Endothelial cell of umbilical vein (primary cell): ENCODE measurements at regions of chr2 and their contacts with region 1.

Region 1: GRCh38 chr2:235551965-235552364 is 58.1 kb downstream of the AGAP1 start:
- DNase-seq: peak; percentile 81
- H3K4me3 ChIP-seq: no peak overlapping the region
- H3K27ac ChIP-seq: no peak overlapping the region
- H3K4me1 ChIP-seq: no peaks in the 10 kb centered on the region
- H3K27me3 ChIP-seq: no peaks in the 10 kb centered on the region
- CTCF ChIP-seq: peak; percentile 59 to 86
- POLR2A ChIP-seq: no peak

Region 2: GRCh38 chr2:235135990-235136561 is 415.9 kb before region 1 on chr2:
- CTCF ChIA-PET with region 1: interaction called, 15 read pairs
- POLR2A ChIA-PET with region 1: no interaction called
- dilution Hi-C with region 1: no loop called
- intact Hi-C with region 1: loop called (anchors 1 kb)
- DNase-seq: peak; percentile 63
- H3K4me3 ChIP-seq: no peak overlapping the region
- H3K27ac ChIP-seq: no peak overlapping the region
- H3K4me1 ChIP-seq: peaks cover 2% of the 10 kb centered on the region
- H3K27me3 ChIP-seq: peaks cover 2 to 6% of the 10 kb centered on the region in 2 experiments
- CTCF ChIP-seq: peak; percentile 66 to 79
- POLR2A ChIP-seq: no peak

Region 3: DNA sequence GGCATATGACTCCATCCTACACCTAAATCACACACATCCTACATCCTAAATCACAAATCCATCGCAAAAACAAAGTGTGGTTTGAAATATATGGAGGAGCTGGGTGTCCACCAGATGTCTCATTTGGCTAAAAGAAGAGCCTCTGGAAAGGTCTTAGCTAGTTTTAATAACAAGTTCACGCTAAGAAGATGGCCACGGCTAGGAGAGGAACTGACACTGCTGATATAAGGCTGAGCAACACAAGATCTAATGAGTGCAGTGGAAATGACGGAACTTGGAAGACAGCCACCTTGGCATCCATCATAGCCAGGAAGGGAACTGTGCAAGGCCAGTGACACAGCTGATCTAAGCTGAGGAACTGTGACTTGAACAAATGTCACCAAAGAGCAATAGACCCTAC is 118.1 kb before region 1 on chr2:
- CTCF ChIA-PET with region 1: interaction called, 14 read pairs
- POLR2A ChIA-PET with region 1: no interaction called
- dilution Hi-C with region 1: no loop called
- intact Hi-C with region 1: no loop called
- DNase-seq: peak; percentile 39
- H3K4me3 ChIP-seq: no peak overlapping the region
- H3K27ac ChIP-seq: no peak overlapping the region
- H3K4me1 ChIP-seq: no peaks in the 10 kb centered on the region
- H3K27me3 ChIP-seq: no peaks in the 10 kb centered on the region
- CTCF ChIP-seq: no peak
- POLR2A ChIP-seq: no peak

Region 4: GRCh38 chr2:235500761-235501672 is 50.9 kb before region 1 on chr2:
- CTCF ChIA-PET with region 1: interaction called, 23 read pairs
- POLR2A ChIA-PET with region 1: no interaction called
- dilution Hi-C with region 1: no loop called
- intact Hi-C with region 1: no loop called
- DNase-seq: peak; percentile 66
- H3K4me3 ChIP-seq: peak overlapping the region in 1 of 3 experiments; percentile 3
- H3K27ac ChIP-seq: peak overlapping the region; percentile 28
- H3K4me1 ChIP-seq: peaks cover 17% of the 10 kb centered on the region
- H3K27me3 ChIP-seq: no peaks in the 10 kb centered on the region
- CTCF ChIP-seq: no peak
- POLR2A ChIP-seq: no peak